Mammary epithelial cell (primary cell): ENCODE measurements at regions of chr10 and their contacts with region 1.

Region 1: DNA sequence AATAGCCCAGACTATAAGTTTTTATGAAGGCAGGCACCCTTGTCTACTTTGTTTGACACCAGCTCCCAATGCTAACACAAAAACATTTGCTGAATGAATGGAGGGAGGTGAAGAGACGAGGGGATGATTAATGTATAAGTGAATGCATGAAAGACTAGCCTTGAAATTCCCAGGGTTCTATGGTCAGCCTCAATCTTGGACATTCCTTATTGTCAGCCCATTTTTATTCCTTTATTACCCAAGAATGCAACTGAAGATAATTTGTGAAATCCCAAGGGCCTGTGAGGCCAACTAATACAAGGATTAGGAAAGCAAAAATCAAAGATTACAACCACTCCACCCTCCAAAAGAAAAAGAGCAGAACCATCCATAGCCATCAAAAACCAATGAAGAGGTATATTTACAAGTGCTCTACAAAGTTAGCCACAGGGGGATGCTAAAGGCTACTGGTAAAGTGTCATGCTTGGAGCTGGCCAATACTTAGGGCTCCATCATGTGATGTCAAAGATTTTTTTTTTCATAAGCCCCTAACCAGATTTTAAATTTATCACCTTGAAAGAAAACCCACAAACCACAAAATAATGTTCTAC is 40.0 kb upstream of the ASAH2 start:
- DNase-seq: no peak
- H3K4me3 ChIP-seq: no peak overlapping the region
- H3K27ac ChIP-seq: no peak overlapping the region
- H3K4me1 ChIP-seq: no peaks in the 10 kb centered on the region
- H3K27me3 ChIP-seq: no peaks in the 10 kb centered on the region
- CTCF ChIP-seq: peak; percentile 30 to 71

Region 2: GRCh38 chr10:50250096-50250854 is 41.1 kb before region 1 on chr10:
- CTCF ChIA-PET with region 1: no interaction called
- dilution Hi-C with region 1: no loop called
- in situ Hi-C with region 1: no loop called
- intact Hi-C with region 1: no loop called
- DNase-seq: no peak
- H3K4me3 ChIP-seq: no peak overlapping the region
- H3K27ac ChIP-seq: no peak overlapping the region
- H3K4me1 ChIP-seq: no peaks in the 10 kb centered on the region
- H3K27me3 ChIP-seq: peaks cover 13% of the 10 kb centered on the region
- CTCF ChIP-seq: no peak

Region 3: GRCh38 chr10:50542871-50543270 is 251.5 kb after region 1 on chr10:
- CTCF ChIA-PET with region 1: no interaction called
- dilution Hi-C with region 1: no loop called
- in situ Hi-C with region 1: no loop called
- intact Hi-C with region 1: no loop called
- DNase-seq: no peak
- H3K4me3 ChIP-seq: no peak overlapping the region
- H3K27ac ChIP-seq: no peak overlapping the region
- H3K4me1 ChIP-seq: peaks cover 3% of the 10 kb centered on the region
- H3K27me3 ChIP-seq: no peaks in the 10 kb centered on the region
- CTCF ChIP-seq: no peak

Region 4: DNA sequence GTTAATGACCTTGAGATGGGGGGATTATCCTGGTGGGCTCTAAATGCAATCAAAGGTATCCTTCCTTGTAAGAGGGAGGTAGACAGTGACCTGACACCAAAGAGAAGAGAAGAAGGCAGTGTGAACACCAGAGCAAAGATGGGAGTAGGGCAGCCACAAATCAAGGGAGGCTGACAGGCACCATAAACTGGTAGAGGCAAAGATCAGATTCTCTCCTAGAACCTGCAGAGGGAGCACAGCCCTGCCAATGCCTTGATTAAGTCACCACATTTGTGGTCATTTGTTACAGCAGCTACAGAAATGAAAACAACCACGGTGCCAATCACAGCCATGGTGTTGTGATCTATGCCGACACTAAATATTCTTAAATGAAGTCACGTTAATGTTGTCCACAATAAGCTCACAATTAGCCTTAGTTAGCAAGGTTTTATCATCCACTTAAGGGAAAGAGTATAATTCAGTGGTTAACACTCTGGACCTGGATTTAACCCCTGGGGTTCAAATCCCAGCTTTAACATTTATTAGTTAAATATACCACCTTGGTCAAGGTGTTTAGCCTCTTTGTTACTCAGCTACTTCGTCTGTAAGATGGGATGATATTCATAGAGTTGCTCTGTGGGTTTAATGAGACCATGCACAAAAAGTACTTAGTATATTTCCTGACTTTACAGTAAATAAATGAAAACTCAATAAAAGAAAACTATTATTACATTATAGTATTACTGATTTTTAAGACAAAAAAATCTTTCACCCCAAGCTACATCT is 261.6 kb after region 1 on chr10:
- CTCF ChIA-PET with region 1: no interaction called
- dilution Hi-C with region 1: no loop called
- in situ Hi-C with region 1: no loop called
- intact Hi-C with region 1: loop called (anchors 10 kb)
- DNase-seq: no peak
- H3K4me3 ChIP-seq: no peak overlapping the region
- H3K27ac ChIP-seq: no peak overlapping the region
- H3K4me1 ChIP-seq: no peaks in the 10 kb centered on the region
- H3K27me3 ChIP-seq: no peaks in the 10 kb centered on the region
- CTCF ChIP-seq: peak; percentile 22 to 43

Region 5: GRCh38 chr10:50658165-50658564 is 366.8 kb after region 1 on chr10:
- CTCF ChIA-PET with region 1: no interaction called
- dilution Hi-C with region 1: no loop called
- in situ Hi-C with region 1: no loop called
- intact Hi-C with region 1: loop called (anchors 2 kb)
- DNase-seq: no peak
- H3K4me3 ChIP-seq: no peak overlapping the region
- H3K27ac ChIP-seq: no peak overlapping the region
- H3K4me1 ChIP-seq: no peaks in the 10 kb centered on the region
- H3K27me3 ChIP-seq: no peaks in the 10 kb centered on the region
- CTCF ChIP-seq: no peak